SK-N-SH (cell line): ENCODE measurements at regions of chr5 and their contacts with region 1.

Region 1: GRCh38 chr5:54234304-54234933 is 76.0 kb downstream of the ARL15 start:
- DNase-seq: peak; percentile 11
- H3K4me3 ChIP-seq: peak overlapping the region in 1 of 2 experiments; percentile 38; a peak in 1 of 4 replicates
- H3K27ac ChIP-seq: no peak overlapping the region
- H3K4me1 ChIP-seq: no peaks in the 10 kb centered on the region; a peak in 1 of 4 replicates
- H3K27me3 ChIP-seq: no peaks in the 10 kb centered on the region
- CTCF ChIP-seq: peak; percentile 74
- EP300 ChIP-seq: no peak
- RAD21 ChIP-seq: peak; percentile 63

Region 2: GRCh38 chr5:53262348-53262970 is 972.0 kb before region 1 on chr5:
- CTCF ChIA-PET with region 1: interaction called, 13 read pairs
- POLR2A ChIA-PET with region 1: no interaction called
- DNase-seq: peak; percentile 2
- H3K4me3 ChIP-seq: no peak overlapping the region
- H3K27ac ChIP-seq: no peak overlapping the region
- H3K4me1 ChIP-seq: peaks cover 0 to 4% of the 10 kb centered on the region in 2 experiments; a peak in 1 of 4 replicates
- H3K27me3 ChIP-seq: no peaks in the 10 kb centered on the region
- CTCF ChIP-seq: peak; percentile 75
- EP300 ChIP-seq: no peak
- RAD21 ChIP-seq: peak; percentile 78

Region 3: DNA sequence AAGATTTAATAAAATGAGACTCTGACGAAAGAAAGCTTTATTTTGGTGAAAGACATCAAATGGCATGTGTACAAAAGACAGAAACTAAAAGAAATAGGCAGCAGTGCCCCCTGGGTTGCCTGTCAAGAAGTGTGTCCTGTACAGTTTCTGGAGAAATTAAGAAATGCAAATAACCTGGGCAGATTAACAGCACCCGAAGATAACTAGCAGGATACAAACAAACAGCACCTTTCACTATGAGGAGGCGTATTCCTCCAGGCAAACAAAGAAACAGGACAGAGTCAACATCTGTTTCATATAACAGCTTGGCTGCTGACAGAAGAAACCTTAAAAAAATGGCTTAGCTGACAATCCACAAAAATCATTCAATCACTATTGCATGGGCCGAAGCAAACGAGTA is 86.4 kb before region 1 on chr5:
- CTCF ChIA-PET with region 1: no interaction called
- POLR2A ChIA-PET with region 1: no interaction called
- DNase-seq: peak; percentile 15
- H3K4me3 ChIP-seq: no peak overlapping the region
- H3K27ac ChIP-seq: peak overlapping the region in 1 of 2 experiments; percentile 8; a peak in 2 of 4 replicates
- H3K4me1 ChIP-seq: peaks cover 0 to 16% of the 10 kb centered on the region in 2 experiments; a peak in 2 of 4 replicates
- H3K27me3 ChIP-seq: no peaks in the 10 kb centered on the region
- CTCF ChIP-seq: peak; percentile 51
- EP300 ChIP-seq: peak in 1 of 2 experiments; percentile 71; a peak in 1 of 4 replicates
- RAD21 ChIP-seq: peak; percentile 46